ENCODE measurements at regions of chr3 and their contacts with region 1.

Region 1: DNA sequence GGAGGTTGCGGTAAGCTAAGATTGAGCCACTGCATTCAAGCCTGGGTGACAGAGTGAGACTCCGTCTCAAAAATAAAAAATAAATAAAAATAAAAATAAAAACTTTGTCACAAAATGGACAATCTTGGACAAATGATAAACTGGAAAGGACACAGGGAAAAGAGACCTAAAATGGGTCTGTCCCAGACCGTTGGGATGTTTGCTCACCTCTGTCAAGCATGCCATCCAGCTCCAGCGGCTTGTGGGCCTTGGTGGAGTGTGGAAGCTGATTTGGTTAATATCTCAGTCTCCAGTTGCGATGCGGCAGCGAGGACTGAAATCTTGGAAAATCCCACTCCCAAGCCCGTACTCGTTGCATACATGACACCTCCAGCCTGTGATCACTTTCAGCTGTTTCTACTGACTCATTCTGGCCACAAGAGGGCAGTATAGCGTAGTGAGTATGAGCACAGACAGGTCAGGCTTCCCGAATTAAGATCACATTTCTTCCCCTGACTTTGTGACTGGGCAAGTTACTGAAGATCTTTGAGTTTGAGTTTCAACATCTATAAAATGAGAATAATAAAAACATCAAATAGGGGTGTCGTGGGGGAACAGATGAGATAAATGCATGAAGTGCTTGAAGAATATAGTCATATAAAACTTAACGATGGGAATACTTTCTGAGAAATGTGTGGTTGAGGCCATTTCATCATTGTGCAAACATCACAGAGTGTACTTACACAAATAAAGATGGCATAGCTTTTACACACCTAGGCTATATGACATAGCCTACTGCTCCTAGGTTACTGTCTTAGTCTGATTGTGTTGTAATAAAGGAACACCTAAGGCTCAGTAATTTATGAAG is 19.6 kb upstream of the MOBP start:
- DNase-seq: peak; percentile 83
- H3K4me3 ChIP-seq: no peak overlapping the region
- H3K27ac ChIP-seq: no peak overlapping the region
- H3K4me1 ChIP-seq: no peaks in the 10 kb centered on the region
- H3K27me3 ChIP-seq: peaks cover 0 to 2% of the 10 kb centered on the region in 2 experiments
- CTCF ChIP-seq: peak; percentile 76 to 78
- POLR2A ChIP-seq: no peak

Region 2: GRCh38 chr3:39414421-39414907 is 33.4 kb before region 1 on chr3:
- CTCF ChIA-PET with region 1: interaction called, 23 read pairs
- POLR2A ChIA-PET with region 1: no interaction called
- dilution Hi-C with region 1: no loop called
- intact Hi-C with region 1: loop called (anchors 1 kb)
- DNase-seq: no peak
- H3K4me3 ChIP-seq: no peak overlapping the region
- H3K27ac ChIP-seq: no peak overlapping the region
- H3K4me1 ChIP-seq: peaks cover 5% of the 10 kb centered on the region
- H3K27me3 ChIP-seq: no peaks in the 10 kb centered on the region
- CTCF ChIP-seq: no peak
- POLR2A ChIP-seq: peak; percentile 85

Region 3: DNA sequence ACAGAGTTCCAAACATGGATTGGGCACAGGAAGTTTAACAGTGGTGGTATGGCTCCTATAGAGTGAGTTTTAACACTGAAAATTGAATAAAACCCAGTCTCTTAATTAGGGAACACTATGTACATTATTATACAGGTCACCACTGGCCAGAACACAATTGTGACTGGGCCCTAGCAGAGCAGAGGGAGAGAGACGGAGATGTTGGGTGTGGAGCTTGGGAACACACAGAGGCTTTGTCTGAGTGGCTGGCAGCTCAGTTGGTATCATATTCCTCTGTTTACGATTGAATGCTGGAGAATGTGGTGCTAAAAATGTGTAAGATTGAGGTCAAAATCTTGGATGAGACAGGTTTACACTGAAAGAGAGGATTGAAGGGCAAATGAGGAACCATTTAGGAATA is 12.8 kb after region 1 on chr3:
- CTCF ChIA-PET with region 1: interaction called, 30 read pairs
- POLR2A ChIA-PET with region 1: no interaction called
- dilution Hi-C with region 1: no loop called
- intact Hi-C with region 1: no loop called
- DNase-seq: no peak
- H3K4me3 ChIP-seq: no peak overlapping the region
- H3K27ac ChIP-seq: no peak overlapping the region
- H3K4me1 ChIP-seq: no peaks in the 10 kb centered on the region
- H3K27me3 ChIP-seq: peaks cover 3 to 5% of the 10 kb centered on the region in 2 experiments
- CTCF ChIP-seq: no peak
- POLR2A ChIP-seq: no peak

Region 4: DNA sequence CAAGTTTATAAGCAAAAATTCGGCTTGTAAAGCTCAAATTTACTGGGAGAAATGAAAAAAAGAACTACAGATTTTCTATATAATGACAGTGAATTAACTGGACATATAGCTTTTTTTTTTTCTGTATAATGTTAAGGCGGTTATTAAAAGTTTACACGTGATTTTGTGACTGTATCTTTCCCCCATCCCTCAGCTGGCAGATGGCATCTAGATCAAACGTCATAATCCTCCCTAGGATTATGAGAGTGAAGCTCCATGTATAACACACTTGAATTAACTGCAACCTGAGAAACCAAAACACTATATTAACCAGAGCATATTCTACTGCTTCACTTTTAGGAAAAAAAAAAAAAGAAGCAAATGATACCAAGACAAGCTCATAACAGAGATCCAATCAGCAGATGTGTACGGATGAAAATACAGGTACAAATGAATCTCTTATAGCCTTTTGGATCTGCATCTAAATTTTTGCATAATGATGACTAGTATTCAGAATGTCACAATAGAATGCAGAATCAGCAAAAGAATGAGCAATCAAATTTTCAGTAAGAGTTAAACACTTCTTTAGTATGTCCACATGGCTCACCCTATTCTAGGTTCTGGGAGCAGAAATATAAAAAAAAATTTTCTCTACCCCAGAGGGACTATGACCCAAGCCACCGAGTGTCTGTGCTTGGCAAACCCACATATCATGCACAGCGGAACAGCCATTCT is 32.0 kb after region 1 on chr3:
- CTCF ChIA-PET with region 1: interaction called, 11 read pairs
- POLR2A ChIA-PET with region 1: no interaction called
- dilution Hi-C with region 1: no loop called
- intact Hi-C with region 1: no loop called
- DNase-seq: no peak
- H3K4me3 ChIP-seq: no peak overlapping the region
- H3K27ac ChIP-seq: no peak overlapping the region
- H3K4me1 ChIP-seq: no peaks in the 10 kb centered on the region
- H3K27me3 ChIP-seq: peaks cover 0 to 8% of the 10 kb centered on the region in 2 experiments
- CTCF ChIP-seq: no peak
- POLR2A ChIP-seq: no peak

Region 5: GRCh38 chr3:39718674-39719595 is 271.1 kb after region 1 on chr3:
- CTCF ChIA-PET with region 1: no interaction called
- POLR2A ChIA-PET with region 1: no interaction called
- dilution Hi-C with region 1: no loop called
- intact Hi-C with region 1: loop called (anchors 5 kb)
- DNase-seq: peak; percentile 38
- H3K4me3 ChIP-seq: no peak overlapping the region
- H3K27ac ChIP-seq: no peak overlapping the region
- H3K4me1 ChIP-seq: no peaks in the 10 kb centered on the region
- H3K27me3 ChIP-seq: no peaks in the 10 kb centered on the region
- CTCF ChIP-seq: no peak
- POLR2A ChIP-seq: no peak

Region 6: GRCh38 chr3:39990532-39990931 is 542.7 kb after region 1 on chr3:
- CTCF ChIA-PET with region 1: interaction called, 5 read pairs
- POLR2A ChIA-PET with region 1: no interaction called
- dilution Hi-C with region 1: no loop called
- intact Hi-C with region 1: loop called (anchors 1 kb)
- DNase-seq: peak; percentile 70
- H3K4me3 ChIP-seq: no peak overlapping the region
- H3K27ac ChIP-seq: no peak overlapping the region
- H3K4me1 ChIP-seq: no peaks in the 10 kb centered on the region
- H3K27me3 ChIP-seq: no peaks in the 10 kb centered on the region
- CTCF ChIP-seq: peak; percentile 34 to 36
- POLR2A ChIP-seq: no peak